ENCODE measurements at regions of chr12 and their contacts with region 1.

Region 1: GRCh38 chr12:95217377-95218149 is at the starts of genes FGD6 and VEZT:
- DNase-seq: peak; percentile 99 to 100
- H3K4me3 ChIP-seq: peak within 1 kb of the TSS; percentile 70 to 97
- H3K27ac ChIP-seq: peak within 1 kb of the TSS; percentile 94 to 100
- H3K4me1 ChIP-seq: peaks cover 0 to 40% (median 6%) of the 10 kb centered on the region in 4 donors
- H3K27me3 ChIP-seq: no peaks in the 10 kb centered on the region
- CTCF ChIP-seq: peak; percentile 49 to 56

Region 2: GRCh38 chr12:95072900-95073697 is 144.5 kb before region 1 on chr12 and contains the start of gene NR2C1:
- intact Hi-C with region 1: loop called (anchors 2 kb)
- DNase-seq: peak; percentile 90 to 95
- H3K4me3 ChIP-seq: peak within 1 kb of the TSS; percentile 73 to 90
- H3K27ac ChIP-seq: peak within 1 kb of the TSS; percentile 79 to 89
- H3K4me1 ChIP-seq: peaks cover 0 to 10% (median 3%) of the 10 kb centered on the region in 4 donors
- H3K27me3 ChIP-seq: no peaks in the 10 kb centered on the region
- CTCF ChIP-seq: no peak

Region 3: GRCh38 chr12:95124106-95124505 is 93.5 kb before region 1 on chr12:
- intact Hi-C with region 1: loop called (anchors 5 kb)
- DNase-seq: no peak
- H3K4me3 ChIP-seq: no peak overlapping the region
- H3K27ac ChIP-seq: peak overlapping the region; percentile 10 to 22
- H3K4me1 ChIP-seq: peaks cover 0 to 2% (median under 1%) of the 10 kb centered on the region in 4 donors
- H3K27me3 ChIP-seq: no peaks in the 10 kb centered on the region
- CTCF ChIP-seq: no peak

Measured in tibial artery (tissue), 4 donors.